Motor neuron (in vitro differentiated cells): ENCODE measurements at regions of chr11 and their contacts with region 1.

Region 1: GRCh38 chr11:10293423-10294289 is at the start of gene SBF2:
- ATAC-seq: peak; percentile 79 to 92 (median 86)
- H3K4me3 ChIP-seq: peak within 1 kb of the TSS; percentile 79 to 99 (median 91)
- H3K27ac ChIP-seq: peak within 1 kb of the TSS; percentile 61 to 85
- H3K4me1 ChIP-seq: peaks cover 0 to 4% of the 10 kb centered on the region in 2 donors
- total RNA-seq, gene SBF2: 31.8 to 66.3 (median 44.6) TPM

Region 2: DNA sequence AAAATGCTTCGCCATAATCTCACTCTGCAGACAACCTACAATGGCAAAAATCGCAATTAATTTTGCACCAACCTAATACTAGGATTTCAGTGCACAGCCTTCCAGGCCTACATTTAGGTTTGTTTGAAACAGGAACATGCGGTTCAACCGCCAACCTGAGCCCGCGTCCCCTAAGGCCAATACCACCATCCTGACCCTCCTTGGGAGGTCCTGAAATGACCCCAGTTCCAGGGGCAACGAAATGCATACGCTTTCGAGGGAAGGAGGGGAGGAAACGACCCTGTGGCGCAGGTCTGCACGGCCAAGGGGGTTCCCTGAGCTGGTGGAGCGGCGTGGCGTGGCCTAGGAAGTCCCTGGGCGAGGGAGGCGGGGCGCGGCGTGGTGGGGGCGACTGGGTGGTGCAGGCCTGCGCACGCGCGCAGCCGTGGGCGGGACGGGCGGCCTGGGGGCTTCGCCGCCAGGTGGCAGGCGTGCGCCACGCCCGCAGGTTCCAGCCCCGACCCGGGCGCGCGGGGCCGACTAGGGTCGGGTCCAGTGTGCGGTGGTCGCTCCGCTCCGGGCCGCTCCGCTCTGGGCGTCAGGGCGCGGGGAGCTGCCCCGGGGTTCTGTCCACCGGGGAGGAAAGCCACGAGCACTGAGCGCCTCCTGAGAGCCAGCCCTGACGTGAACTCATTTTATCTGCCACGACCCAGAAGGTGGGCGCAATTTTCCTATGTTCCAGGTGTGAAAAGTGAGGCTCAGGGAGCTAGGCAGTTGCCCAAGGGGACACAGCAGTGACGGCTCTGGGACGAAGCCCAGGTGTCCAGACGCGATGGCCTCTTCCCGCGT is 535.6 kb before region 1 on chr11:
- in situ Hi-C with region 1: loop called in 1 of 9 experiments (anchors 25 kb)
- ATAC-seq: peak; percentile 10 to 93 (median 84)
- H3K4me3 ChIP-seq: peak overlapping the region; percentile 34 to 47 (median 45)
- H3K27ac ChIP-seq: no peak overlapping the region
- H3K4me1 ChIP-seq: peaks cover 11% of the 10 kb centered on the region in 2 donors

Region 3: DNA sequence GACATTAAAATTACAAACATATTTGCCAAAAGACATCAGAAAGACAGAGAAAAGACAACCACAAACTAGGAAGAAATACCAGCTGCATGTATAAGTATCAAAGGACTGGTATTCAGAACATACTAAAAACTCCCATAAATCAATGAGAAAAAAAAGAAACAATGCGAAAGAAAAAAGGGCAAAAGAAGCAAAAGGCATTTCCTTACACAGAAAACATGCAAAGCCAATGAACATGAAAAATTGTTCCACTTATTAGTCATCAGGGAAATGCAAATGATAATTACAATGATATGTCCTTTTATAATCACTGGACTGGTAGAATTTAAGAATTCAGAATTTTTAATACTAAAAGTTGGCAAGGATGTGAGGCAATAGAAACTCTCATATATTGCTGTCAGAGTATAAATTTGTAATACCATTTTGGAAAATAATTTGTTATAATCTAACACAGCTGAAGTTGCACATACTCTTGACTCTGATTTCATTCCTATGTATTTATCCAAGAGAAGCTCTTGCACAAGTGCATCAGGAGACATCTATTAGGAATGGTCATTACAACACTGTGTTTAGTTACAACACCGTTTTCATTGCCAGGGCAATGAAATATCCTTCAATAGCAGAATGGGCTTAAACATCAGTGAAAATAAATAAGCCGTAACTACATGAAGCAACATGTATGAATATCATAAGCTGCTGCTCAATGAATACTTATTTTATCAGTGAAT is 350.1 kb before region 1 on chr11:
- in situ Hi-C with region 1: no loop called
- ATAC-seq: peak in 3 of 8 experiments; percentile 36 to 97 (median 96)
- H3K4me3 ChIP-seq: no peak overlapping the region
- H3K27ac ChIP-seq: no peak overlapping the region
- H3K4me1 ChIP-seq: no peaks in the 10 kb centered on the region

Region 4: GRCh38 chr11:10208131-10208575 is 85.5 kb before region 1 on chr11:
- in situ Hi-C with region 1: loop called in 1 of 9 experiments (anchors 10 kb)
- ATAC-seq: peak in 3 of 8 experiments; percentile 69 to 75 (median 74)
- H3K4me3 ChIP-seq: no peak overlapping the region
- H3K27ac ChIP-seq: no peak overlapping the region
- H3K4me1 ChIP-seq: no peaks in the 10 kb centered on the region